ENCODE measurements at regions of chr1 and their contacts with region 1.

Region 1: GRCh38 chr1:26279456-26280332 is at the start of gene SH3BGRL3:
- DNase-seq: peak; percentile 85
- H3K4me3 ChIP-seq: peak within 1 kb of the TSS; percentile 72 to 81
- H3K27ac ChIP-seq: peak within 1 kb of the TSS; percentile 75 to 87
- H3K4me1 ChIP-seq: peaks cover 46% of the 10 kb centered on the region
- H3K27me3 ChIP-seq: no peaks in the 10 kb centered on the region
- CTCF ChIP-seq: no peak
- POLR2A ChIP-seq: peak; percentile 54
- total RNA-seq, gene SH3BGRL3: 24.4 to 25.4 TPM

Region 2: GRCh38 chr1:26321315-26322041 is 41.8 kb after region 1 on chr1:
- intact Hi-C with region 1: loop called (anchors 10 kb)
- DNase-seq: peak; percentile 95
- H3K4me3 ChIP-seq: no peak overlapping the region
- H3K27ac ChIP-seq: no peak overlapping the region
- H3K4me1 ChIP-seq: no peaks in the 10 kb centered on the region
- H3K27me3 ChIP-seq: no peaks in the 10 kb centered on the region
- CTCF ChIP-seq: peak; percentile 66 to 79 (median 77)
- POLR2A ChIP-seq: no peak